ENCODE measurements at regions of chr17 and their contacts with region 1.

Region 1: DNA sequence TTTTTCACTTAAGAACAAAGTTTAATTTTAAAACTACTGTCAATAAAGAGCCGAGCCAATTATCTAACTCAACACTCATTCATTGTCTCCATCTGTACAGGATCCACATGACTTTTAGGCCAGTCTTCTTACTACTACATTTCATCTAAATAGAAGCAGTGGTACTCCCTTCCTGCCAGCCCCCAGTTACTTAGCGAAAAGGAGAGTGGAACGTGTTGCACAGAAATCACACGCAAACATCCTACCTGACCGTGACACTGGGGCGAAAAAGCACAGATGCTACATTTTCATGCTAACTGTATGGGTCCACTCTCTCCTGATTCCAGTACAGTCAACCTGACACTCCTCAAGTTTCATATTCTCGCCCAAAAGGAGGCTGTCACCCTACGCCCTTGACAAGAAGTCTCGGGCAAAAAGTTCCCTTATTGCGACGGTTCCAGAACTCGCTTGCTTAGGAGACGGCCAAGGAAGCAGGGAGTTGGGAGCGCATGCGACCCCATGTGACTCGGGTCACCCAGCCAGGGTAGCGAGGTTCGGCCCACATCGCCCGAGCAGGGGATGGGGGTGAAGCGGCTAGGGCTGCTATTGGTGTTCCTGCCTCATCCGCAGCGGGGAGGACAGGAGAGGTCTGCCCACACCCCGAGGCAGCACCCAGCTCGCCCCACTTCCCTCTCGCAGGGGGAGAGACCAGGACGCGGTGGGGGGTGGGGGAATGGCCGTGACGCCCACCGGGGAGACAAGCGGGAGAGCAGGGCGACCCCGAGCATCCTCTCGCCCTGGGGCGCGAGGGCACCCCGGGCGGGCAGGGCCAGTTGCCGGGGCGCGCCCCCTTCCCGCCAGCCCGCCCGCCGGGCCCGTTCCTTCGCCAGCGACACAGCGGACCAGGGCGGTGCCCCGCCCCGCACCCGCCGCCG is 935 bp downstream of the GNA13 start:
- DNase-seq: peak; percentile 68
- ATAC-seq: peak; percentile 13
- H3K4me3 ChIP-seq: peak overlapping the region; percentile 85 to 99 (median 90)
- H3K4me3 Mint-ChIP-seq: peak overlapping the region; percentile 99
- H3K27ac ChIP-seq: peak overlapping the region; percentile 96 to 97
- H3K27ac Mint-ChIP-seq: peak overlapping the region; percentile 98
- H3K4me1 ChIP-seq: peaks cover 21 to 25% of the 10 kb centered on the region in 2 donors
- H3K4me1 Mint-ChIP-seq: peaks cover 52% of the 10 kb centered on the region
- H3K27me3 ChIP-seq: no peaks in the 10 kb centered on the region
- H3K27me3 Mint-ChIP-seq: no peaks in the 10 kb centered on the region
- CTCF ChIP-seq: no peak

Region 2: DNA sequence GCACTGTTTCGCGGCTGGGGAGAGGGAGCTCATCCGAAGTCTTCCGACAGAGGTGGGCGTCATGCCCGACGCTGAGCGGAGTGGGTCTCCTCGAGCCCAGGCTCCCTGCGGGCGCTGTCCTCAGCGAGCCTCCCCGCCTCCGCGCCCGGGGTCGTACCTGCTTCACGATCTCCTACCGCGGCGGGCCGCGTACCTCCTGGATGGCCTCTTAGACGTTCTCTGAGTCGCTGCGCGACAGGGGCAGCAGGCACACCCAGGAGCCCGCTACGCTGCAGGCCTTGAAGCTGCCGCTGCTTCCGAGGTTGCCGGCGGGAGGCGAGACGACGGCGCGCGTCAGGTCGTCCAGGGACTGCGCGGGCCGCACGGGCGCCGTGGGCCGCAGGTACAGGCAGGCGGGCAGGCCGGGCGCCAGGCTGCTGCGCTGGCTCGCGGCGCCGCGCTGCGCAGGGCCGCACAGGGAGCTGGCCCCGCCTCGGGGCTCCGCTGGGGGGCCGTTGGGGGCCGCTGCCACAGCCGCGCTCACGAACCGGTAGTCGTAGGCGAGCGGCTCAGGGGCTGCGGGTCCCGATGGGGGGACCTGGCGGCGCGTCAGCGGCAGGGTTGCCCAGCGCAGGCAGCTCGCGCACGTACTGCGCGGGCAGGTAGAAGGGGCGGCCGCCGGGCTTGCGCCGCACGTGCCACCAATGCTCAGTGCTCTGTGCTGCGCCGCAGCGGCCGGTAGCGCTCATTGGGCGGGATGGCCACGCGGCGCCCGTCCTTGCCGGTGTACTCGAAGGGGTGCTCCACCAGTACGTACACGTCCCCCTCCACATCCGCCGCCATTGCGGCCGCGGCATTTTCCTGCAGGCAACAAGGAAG is 277.1 kb before region 1 on chr17:
- CTCF ChIA-PET with region 1: no interaction called
- POLR2A ChIA-PET with region 1: no interaction called
- intact Hi-C with region 1: loop called (anchors 5 kb)
- DNase-seq: peak; percentile 61
- ATAC-seq: peak; percentile 14
- H3K4me3 ChIP-seq: peak overlapping the region; percentile 12 to 55 (median 51)
- H3K4me3 Mint-ChIP-seq: peak overlapping the region; percentile 94
- H3K27ac ChIP-seq: no peak overlapping the region
- H3K27ac Mint-ChIP-seq: peak overlapping the region; percentile 76
- H3K4me1 ChIP-seq: peaks cover 37 to 56% of the 10 kb centered on the region in 2 donors
- H3K4me1 Mint-ChIP-seq: peaks cover 45% of the 10 kb centered on the region
- H3K27me3 ChIP-seq: peaks cover 0 to 32% (median 10%) of the 10 kb centered on the region in 4 experiments
- H3K27me3 Mint-ChIP-seq: peaks cover 3% of the 10 kb centered on the region
- CTCF ChIP-seq: no peak

Region 3: DNA sequence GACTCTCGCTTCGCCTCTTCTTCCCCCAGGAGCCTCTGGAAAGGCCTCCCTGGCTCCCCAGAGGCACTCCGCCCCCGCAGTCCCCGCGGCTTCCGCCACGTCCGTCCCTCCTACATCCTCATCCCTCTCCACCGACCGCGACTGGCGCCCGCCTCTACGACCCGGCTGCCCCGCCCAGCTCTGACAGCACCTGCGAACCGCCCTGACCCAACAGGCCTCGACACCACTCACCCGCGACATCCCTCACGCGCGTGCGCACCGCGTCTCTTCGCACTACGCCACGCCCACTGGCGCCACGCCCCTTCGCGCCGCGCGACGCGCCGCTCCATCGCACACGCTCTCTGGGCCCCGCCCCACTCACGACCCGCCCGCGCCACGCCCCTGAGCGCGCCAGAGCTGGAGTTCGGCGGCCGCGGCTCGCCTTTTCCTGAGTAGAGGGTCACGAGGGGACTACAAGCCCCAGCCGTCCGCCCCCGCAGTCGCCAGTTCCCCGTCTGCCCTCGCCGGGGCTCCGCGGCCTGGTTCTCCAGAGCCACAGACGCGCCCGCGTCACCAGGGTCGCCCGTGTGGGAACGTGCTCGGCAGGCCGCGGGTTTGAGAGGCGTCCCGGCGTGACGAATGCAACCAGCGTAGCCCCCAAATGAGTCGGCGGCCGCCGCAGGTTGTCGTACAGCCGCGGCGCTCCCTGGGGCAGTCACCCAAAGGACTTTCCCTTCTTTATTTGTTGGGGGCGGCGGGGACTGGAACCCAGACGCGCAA is 80.1 kb before region 1 on chr17:
- CTCF ChIA-PET with region 1: interaction called, 7 read pairs
- POLR2A ChIA-PET with region 1: interaction called, 29 read pairs
- intact Hi-C with region 1: loop called (anchors 1 kb)
- DNase-seq: peak; percentile 100
- ATAC-seq: peak; percentile 74
- H3K4me3 ChIP-seq: peak overlapping the region in 4 of 5 experiments; percentile 59 to 77 (median 68)
- H3K4me3 Mint-ChIP-seq: peak overlapping the region; percentile 92
- H3K27ac ChIP-seq: peak overlapping the region; percentile 95 to 99
- H3K27ac Mint-ChIP-seq: peak overlapping the region; percentile 99
- H3K4me1 ChIP-seq: peaks cover 28 to 34% of the 10 kb centered on the region in 2 donors
- H3K4me1 Mint-ChIP-seq: peaks cover 56% of the 10 kb centered on the region
- H3K27me3 ChIP-seq: no peaks in the 10 kb centered on the region
- H3K27me3 Mint-ChIP-seq: no peaks in the 10 kb centered on the region
- CTCF ChIP-seq: no peak

Region 4: DNA sequence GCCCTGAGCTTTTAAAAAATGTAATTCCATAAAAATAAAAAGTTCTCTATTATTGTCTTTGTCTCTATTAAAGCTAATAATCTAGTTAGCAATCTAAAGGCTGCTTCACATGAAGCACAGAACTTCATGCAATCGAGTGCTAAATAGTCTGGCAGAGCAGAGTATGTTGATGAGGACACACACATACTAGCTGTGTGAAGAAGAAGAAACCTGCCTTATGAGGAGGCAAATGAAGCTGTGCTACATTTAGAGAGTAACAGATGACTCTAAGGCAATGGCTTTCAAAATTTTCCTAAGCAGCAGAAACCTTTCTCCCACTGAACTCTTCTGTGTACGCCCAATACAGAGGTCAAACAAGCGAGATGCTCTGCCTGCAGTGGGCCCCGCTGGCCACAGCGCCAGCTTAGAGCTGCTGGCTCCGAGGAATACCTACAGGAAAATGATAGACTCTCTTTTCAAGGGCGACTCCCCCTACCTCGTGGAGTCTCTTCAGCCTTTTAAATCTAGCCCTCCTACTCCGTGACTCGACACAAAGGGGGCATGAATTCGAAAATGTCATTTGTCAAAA is 38.3 kb before region 1 on chr17:
- CTCF ChIA-PET with region 1: no interaction called
- POLR2A ChIA-PET with region 1: no interaction called
- intact Hi-C with region 1: no loop called
- DNase-seq: no peak
- ATAC-seq: no peak
- H3K4me3 ChIP-seq: no peak overlapping the region
- H3K4me3 Mint-ChIP-seq: no peak overlapping the region
- H3K27ac ChIP-seq: peak overlapping the region in 1 of 2 donors; percentile 13
- H3K27ac Mint-ChIP-seq: no peak overlapping the region
- H3K4me1 ChIP-seq: peaks cover 17 to 24% of the 10 kb centered on the region in 2 donors
- H3K4me1 Mint-ChIP-seq: peaks cover 75% of the 10 kb centered on the region
- H3K27me3 ChIP-seq: no peaks in the 10 kb centered on the region
- H3K27me3 Mint-ChIP-seq: no peaks in the 10 kb centered on the region
- CTCF ChIP-seq: no peak

Region 5: DNA sequence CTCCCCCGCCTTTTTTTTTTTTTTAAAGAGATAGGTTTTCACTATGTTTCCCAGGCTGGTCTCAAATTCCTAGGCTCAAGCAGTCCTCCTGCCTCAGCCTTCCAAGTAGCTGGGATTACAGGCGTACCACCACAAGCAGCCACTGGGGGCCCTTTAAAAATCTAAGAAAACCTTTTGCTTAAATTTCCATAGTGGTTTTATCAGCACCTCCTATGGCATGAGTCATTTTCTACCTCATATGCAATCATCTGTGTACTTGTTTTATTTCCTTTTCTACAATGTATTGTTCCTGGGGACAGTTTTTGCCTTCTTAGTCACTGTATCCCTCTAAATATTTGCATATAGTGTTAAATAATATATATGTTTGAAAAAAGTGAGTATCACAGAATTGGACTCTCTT is 28.3 kb before region 1 on chr17:
- CTCF ChIA-PET with region 1: interaction called, 3 read pairs
- POLR2A ChIA-PET with region 1: interaction called, 14 read pairs
- intact Hi-C with region 1: loop called (anchors 1 kb)
- DNase-seq: peak; percentile 57
- ATAC-seq: peak; percentile 42
- H3K4me3 ChIP-seq: no peak overlapping the region
- H3K4me3 Mint-ChIP-seq: peak overlapping the region; percentile 63
- H3K27ac ChIP-seq: peak overlapping the region; percentile 31 to 68
- H3K27ac Mint-ChIP-seq: peak overlapping the region; percentile 87
- H3K4me1 ChIP-seq: peaks cover 71 to 82% of the 10 kb centered on the region in 2 donors
- H3K4me1 Mint-ChIP-seq: peaks cover 89% of the 10 kb centered on the region
- H3K27me3 ChIP-seq: no peaks in the 10 kb centered on the region
- H3K27me3 Mint-ChIP-seq: no peaks in the 10 kb centered on the region
- CTCF ChIP-seq: peak; percentile 74

Region 6: DNA sequence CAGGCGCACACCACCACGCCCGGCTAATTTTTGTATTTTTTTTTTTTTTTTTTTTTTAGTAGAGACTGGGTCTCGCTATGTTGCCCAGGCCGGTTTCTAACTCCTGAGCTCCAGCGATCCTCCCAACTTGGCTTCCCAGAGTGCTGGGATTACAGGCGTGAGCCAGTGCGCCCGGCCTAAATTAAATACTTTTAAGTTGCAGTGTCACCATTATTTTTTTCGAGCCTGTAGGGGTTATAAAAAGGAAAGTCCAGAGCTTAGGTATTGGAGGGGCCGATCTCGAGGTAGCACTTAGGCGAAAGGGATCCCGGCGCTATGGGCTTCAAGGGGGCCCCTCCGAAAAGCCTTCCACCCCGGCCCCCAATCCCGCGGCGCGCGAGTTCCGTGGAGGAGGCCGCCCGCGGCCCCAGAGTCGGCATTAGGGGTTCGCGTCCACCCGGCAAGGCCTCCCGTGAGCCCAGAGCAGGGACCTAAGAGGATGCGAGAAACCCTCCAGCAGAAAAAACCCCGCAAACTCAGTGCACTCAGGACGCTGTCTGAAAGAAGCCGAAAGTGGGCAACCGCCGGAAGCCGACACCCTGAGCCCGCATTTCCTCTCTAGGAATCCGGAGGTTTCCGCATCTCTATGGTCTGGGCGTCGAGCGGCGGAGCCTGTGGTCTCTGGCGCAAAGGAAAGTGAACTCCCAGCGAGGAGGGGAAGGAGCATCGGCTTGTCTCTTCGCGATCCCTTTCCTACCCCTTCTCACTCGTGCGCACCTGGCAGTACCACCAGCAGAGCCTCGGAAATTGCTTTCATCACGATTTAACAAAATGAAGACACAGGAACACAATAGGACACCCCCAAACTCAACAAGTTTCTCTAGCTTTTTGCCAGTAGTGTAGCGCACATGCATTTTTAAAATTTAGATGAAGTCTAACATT is 67.5 kb after region 1 on chr17:
- CTCF ChIA-PET with region 1: no interaction called
- POLR2A ChIA-PET with region 1: interaction called, 3 read pairs
- intact Hi-C with region 1: loop called (anchors 1 kb)
- DNase-seq: peak; percentile 93
- ATAC-seq: peak; percentile 88
- H3K4me3 ChIP-seq: peak overlapping the region; percentile 57 to 79 (median 68)
- H3K4me3 Mint-ChIP-seq: peak overlapping the region; percentile 95
- H3K27ac ChIP-seq: peak overlapping the region; percentile 64 to 84
- H3K27ac Mint-ChIP-seq: peak overlapping the region; percentile 97
- H3K4me1 ChIP-seq: peaks cover 9 to 13% of the 10 kb centered on the region in 2 donors
- H3K4me1 Mint-ChIP-seq: peaks cover 14% of the 10 kb centered on the region
- H3K27me3 ChIP-seq: peaks cover 0 to 7% (median 0%) of the 10 kb centered on the region in 4 experiments
- H3K27me3 Mint-ChIP-seq: no peaks in the 10 kb centered on the region
- CTCF ChIP-seq: no peak

Region 7: GRCh38 chr17:65219124-65219523 is 163.5 kb after region 1 on chr17:
- CTCF ChIA-PET with region 1: no interaction called
- POLR2A ChIA-PET with region 1: no interaction called
- intact Hi-C with region 1: no loop called
- DNase-seq: no peak
- ATAC-seq: no peak
- H3K4me3 ChIP-seq: no peak overlapping the region
- H3K4me3 Mint-ChIP-seq: no peak overlapping the region
- H3K27ac ChIP-seq: no peak overlapping the region
- H3K27ac Mint-ChIP-seq: no peak overlapping the region
- H3K4me1 ChIP-seq: no peaks in the 10 kb centered on the region
- H3K4me1 Mint-ChIP-seq: no peaks in the 10 kb centered on the region
- H3K27me3 ChIP-seq: peaks cover 0 to 3% (median 0%) of the 10 kb centered on the region in 4 experiments
- H3K27me3 Mint-ChIP-seq: peaks cover 22% of the 10 kb centered on the region
- CTCF ChIP-seq: no peak